ENCODE measurements at regions of chr17 and their contacts with region 1.

Region 1: DNA sequence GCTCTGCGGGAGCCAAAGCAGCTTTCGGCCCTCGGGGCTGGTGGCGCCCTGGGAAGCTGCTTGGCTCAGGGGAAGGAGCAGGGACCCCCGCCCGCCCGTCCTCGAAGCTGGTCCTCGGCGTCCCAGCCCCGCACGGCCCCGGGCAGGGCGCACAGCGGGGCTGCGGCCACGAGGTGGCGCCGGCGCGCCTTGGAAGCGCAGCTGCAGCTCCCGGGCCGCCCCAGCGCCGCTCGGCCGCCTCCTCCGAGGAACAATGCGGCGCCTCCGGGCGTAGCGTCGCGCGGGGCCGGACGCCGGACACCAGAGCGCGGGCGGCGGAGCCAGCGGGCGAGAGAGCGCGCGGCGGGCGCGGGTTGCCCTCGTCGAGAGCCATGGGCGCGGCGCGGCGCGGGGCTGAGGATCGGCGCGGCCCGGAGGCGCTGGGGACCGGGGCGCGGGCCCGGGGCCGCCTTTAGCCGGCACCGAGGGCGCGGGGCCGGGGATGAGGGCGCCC is at the start of gene MGAT5B:
- DNase-seq: peak; percentile 87
- H3K27ac ChIP-seq: peak within 1 kb of the TSS; percentile 73
- CTCF ChIP-seq: peak; percentile 98

Region 2: GRCh38 chr17:76924345-76925342 is 56.4 kb after region 1 on chr17:
- CTCF ChIA-PET with region 1: no interaction called
- POLR2A ChIA-PET with region 1: no interaction called
- DNase-seq: no peak
- H3K27ac ChIP-seq: peak overlapping the region; percentile 16; the same call in 1 of the 2 replicates
- CTCF ChIP-seq: no peak

Region 3: DNA sequence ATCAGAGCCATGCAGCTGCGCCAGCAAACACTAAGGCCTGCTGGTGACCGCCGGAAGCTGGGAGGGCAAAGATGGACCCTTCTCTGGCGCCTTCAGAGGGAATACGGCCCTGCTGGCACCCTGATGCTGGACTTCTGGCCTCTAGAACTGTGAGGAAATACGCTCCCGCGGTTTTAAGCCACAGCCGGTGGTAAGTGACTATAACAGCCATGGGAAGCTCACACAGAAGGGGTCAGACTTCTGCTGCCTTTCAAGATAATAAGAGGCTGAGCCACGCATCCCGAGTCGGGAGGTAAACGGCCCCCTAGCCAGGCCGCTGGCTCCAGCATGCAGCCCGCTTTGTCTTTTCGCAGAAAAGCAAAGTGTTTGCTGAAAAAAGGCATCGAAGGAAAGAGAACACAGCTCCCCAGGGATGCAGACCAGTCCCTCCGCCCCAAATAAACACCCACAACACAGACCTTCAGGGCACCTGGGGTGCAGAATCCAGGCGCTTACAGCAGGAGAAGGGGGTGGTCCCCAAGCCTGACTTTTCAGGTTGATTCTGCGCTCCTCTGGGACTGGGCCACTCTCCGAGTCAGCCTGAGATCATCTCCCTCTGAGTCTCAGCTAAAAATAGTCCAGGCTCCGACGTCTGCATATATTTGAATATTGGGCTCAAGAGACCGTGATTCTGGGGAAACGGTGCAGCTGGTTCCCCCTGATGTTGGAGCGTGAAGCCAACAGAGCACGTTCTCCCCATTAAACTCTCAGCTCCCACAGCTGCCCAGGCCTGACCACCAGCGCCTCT is 89.6 kb after region 1 on chr17:
- CTCF ChIA-PET with region 1: no interaction called
- POLR2A ChIA-PET with region 1: no interaction called
- DNase-seq: no peak
- H3K27ac ChIP-seq: no peak overlapping the region
- CTCF ChIP-seq: no peak

Region 4: GRCh38 chr17:77054936-77055335 is 186.7 kb after region 1 on chr17:
- CTCF ChIA-PET with region 1: interaction called, 42 read pairs
- POLR2A ChIA-PET with region 1: no interaction called
- DNase-seq: no peak
- H3K27ac ChIP-seq: no peak overlapping the region
- CTCF ChIP-seq: no peak

Region 5: DNA sequence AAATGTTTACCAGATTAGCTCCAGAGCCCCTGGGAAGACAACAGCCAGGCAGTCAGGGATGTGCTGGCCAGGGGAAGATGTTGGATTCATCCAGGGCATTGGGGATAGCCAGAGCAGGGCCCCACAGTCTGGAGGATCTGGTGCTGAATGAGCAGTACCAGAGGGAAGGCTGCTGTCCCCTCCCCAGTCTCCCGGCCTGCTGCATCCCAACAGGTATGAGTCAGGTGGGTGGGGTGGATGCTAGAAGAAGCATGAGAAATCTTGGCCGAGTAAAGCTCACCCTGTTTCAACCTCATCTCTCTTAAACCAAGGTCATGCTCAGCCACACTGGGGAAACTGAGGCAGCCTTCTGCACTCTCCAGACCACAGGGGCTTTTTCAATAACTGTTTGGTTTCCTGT is 200.7 kb after region 1 on chr17:
- CTCF ChIA-PET with region 1: interaction called, 20 read pairs
- POLR2A ChIA-PET with region 1: no interaction called
- DNase-seq: peak; percentile 80
- H3K27ac ChIP-seq: no peak overlapping the region
- CTCF ChIP-seq: no peak

Measured in RWPE1 (cell line).